Naive thymus-derived CD4-positive, alpha-beta T cell (primary cell): ENCODE measurements at regions of chr10 and their contacts with region 1.

Region 1: GRCh38 chr10:129030996-129031843 is 435.8 kb upstream of the MGMT start:
- DNase-seq: peak; percentile 30 to 64 (median 56)
- ATAC-seq: peak; percentile 72
- H3K4me3 ChIP-seq: no peak overlapping the region
- H3K4me3 Mint-ChIP-seq: peak overlapping the region in 6 of 10 donors; percentile 46 to 74 (median 61)
- H3K27ac ChIP-seq: no peak overlapping the region
- H3K27ac Mint-ChIP-seq: peak overlapping the region in 3 of 9 donors; percentile 1 to 58 (median 13)
- H3K4me1 ChIP-seq: peaks cover 5 to 23% of the 10 kb centered on the region in 2 donors
- H3K4me1 Mint-ChIP-seq: peaks cover 11 to 48% (median 39%) of the 10 kb centered on the region in 7 donors
- H3K27me3 ChIP-seq: no peaks in the 10 kb centered on the region
- H3K27me3 Mint-ChIP-seq: peaks cover 15 to 44% (median 24%) of the 10 kb centered on the region in 5 donors

Region 2: GRCh38 chr10:128211953-128212727 is 819.1 kb before region 1 on chr10:
- CTCF ChIA-PET with region 1: no interaction called
- POLR2A ChIA-PET with region 1: no interaction called
- intact Hi-C with region 1: loop called in 1 of 2 experiments (anchors 5 kb)
- DNase-seq: peak; percentile 66 to 91 (median 80)
- ATAC-seq: peak; percentile 87
- H3K4me3 ChIP-seq: peak overlapping the region; percentile 44
- H3K4me3 Mint-ChIP-seq: peak overlapping the region; percentile 75 to 91 (median 86)
- H3K27ac ChIP-seq: no peak overlapping the region
- H3K27ac Mint-ChIP-seq: peak overlapping the region; percentile 83 to 94 (median 88)
- H3K4me1 ChIP-seq: peaks cover 4 to 8% of the 10 kb centered on the region in 2 donors
- H3K4me1 Mint-ChIP-seq: peaks cover 10 to 25% (median 17%) of the 10 kb centered on the region in 7 donors
- H3K27me3 ChIP-seq: no peaks in the 10 kb centered on the region
- H3K27me3 Mint-ChIP-seq: peaks cover 0 to 21% (median 0%) of the 10 kb centered on the region in 5 donors

Region 3: DNA sequence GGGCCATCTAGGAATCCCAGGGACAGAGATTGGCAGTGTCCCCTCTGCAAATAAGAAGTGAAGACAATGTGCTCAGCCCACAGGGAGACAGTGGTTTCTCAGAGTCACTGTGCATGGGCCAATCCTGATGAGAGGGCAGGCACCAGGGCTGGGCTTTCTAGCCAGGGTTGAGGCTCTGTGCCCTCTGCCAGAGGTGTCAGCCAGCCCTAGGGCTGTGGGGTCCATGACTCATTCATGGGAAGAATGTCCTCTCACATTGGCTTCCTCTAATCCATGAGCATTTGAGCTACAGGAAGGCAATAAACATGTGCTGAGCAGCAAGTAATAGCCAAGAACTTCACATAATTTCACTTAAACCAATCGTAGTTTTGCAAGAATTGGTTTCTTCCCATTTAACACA is 46.2 kb before region 1 on chr10:
- CTCF ChIA-PET with region 1: no interaction called
- POLR2A ChIA-PET with region 1: no interaction called
- intact Hi-C with region 1: no loop called
- DNase-seq: no peak
- ATAC-seq: no peak
- H3K4me3 ChIP-seq: no peak overlapping the region
- H3K4me3 Mint-ChIP-seq: no peak overlapping the region
- H3K27ac ChIP-seq: no peak overlapping the region
- H3K27ac Mint-ChIP-seq: no peak overlapping the region
- H3K4me1 ChIP-seq: no peaks in the 10 kb centered on the region
- H3K4me1 Mint-ChIP-seq: no peaks in the 10 kb centered on the region
- H3K27me3 ChIP-seq: no peaks in the 10 kb centered on the region
- H3K27me3 Mint-ChIP-seq: peaks cover 0 to 9% (median 5%) of the 10 kb centered on the region in 5 donors

Region 4: GRCh38 chr10:129101232-129101980 is 70.2 kb after region 1 on chr10:
- CTCF ChIA-PET with region 1: no interaction called
- POLR2A ChIA-PET with region 1: interaction called, 9 read pairs
- intact Hi-C with region 1: loop called in 1 of 2 experiments (anchors 1 kb)
- DNase-seq: peak in 4 of 9 donors; percentile 10 to 35 (median 20)
- ATAC-seq: no peak
- H3K4me3 ChIP-seq: no peak overlapping the region
- H3K4me3 Mint-ChIP-seq: peak overlapping the region in 7 of 10 donors; percentile 8 to 58 (median 30)
- H3K27ac ChIP-seq: no peak overlapping the region
- H3K27ac Mint-ChIP-seq: peak overlapping the region in 7 of 9 donors; percentile 7 to 88 (median 67)
- H3K4me1 ChIP-seq: peaks cover 0 to 39% of the 10 kb centered on the region in 2 donors
- H3K4me1 Mint-ChIP-seq: peaks cover 6 to 66% (median 55%) of the 10 kb centered on the region in 7 donors
- H3K27me3 ChIP-seq: no peaks in the 10 kb centered on the region
- H3K27me3 Mint-ChIP-seq: no peaks in the 10 kb centered on the region

Region 5: DNA sequence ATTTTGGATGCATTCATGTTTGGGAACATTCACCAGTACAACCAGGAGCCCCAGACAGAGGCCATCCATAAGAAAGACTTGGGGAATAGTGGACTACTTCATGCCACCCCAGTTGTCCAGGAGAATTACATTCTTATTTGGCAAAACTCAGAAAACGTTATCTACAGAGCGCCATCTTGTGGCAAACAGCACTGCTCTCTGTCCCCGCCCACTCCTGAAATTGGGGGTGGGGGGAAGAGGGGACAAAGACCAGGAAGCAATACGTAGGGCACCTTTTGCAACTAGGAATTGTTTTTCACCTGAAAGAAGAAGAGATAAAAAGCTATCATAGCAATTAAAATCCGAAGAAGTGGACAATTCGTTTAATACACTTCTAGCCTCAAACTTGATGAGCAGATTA is 301.3 kb after region 1 on chr10:
- CTCF ChIA-PET with region 1: interaction called, 98 read pairs
- POLR2A ChIA-PET with region 1: interaction called, 11 read pairs
- intact Hi-C with region 1: loop called (anchors 1 kb)
- DNase-seq: peak in 4 of 9 donors; percentile 8 to 29 (median 19)
- ATAC-seq: no peak
- H3K4me3 ChIP-seq: no peak overlapping the region
- H3K4me3 Mint-ChIP-seq: peak overlapping the region in 2 of 10 donors; percentile 37 to 44
- H3K27ac ChIP-seq: no peak overlapping the region
- H3K27ac Mint-ChIP-seq: peak overlapping the region in 1 of 9 donors; percentile 0
- H3K4me1 ChIP-seq: no peaks in the 10 kb centered on the region
- H3K4me1 Mint-ChIP-seq: peaks cover 0 to 9% (median 4%) of the 10 kb centered on the region in 7 donors
- H3K27me3 ChIP-seq: no peaks in the 10 kb centered on the region
- H3K27me3 Mint-ChIP-seq: peaks cover 8 to 31% (median 12%) of the 10 kb centered on the region in 5 donors

Region 6: GRCh38 chr10:129963641-129964501 is 932.7 kb after region 1 on chr10 and contains the start of gene EBF3:
- CTCF ChIA-PET with region 1: no interaction called
- POLR2A ChIA-PET with region 1: no interaction called
- intact Hi-C with region 1: loop called in 1 of 2 experiments (anchors 5 kb)
- DNase-seq: peak in 8 of 9 donors; percentile 30 to 61 (median 54)
- ATAC-seq: peak; percentile 80
- H3K4me3 ChIP-seq: peak within 1 kb of the TSS; percentile 32
- H3K4me3 Mint-ChIP-seq: peak within 1 kb of the TSS; percentile 67 to 89 (median 77)
- H3K27ac ChIP-seq: no peak within 1 kb of the TSS
- H3K27ac Mint-ChIP-seq: peak within 1 kb of the TSS in 3 of 9 donors; percentile 45 to 76 (median 65)
- H3K4me1 ChIP-seq: peaks cover 7 to 13% of the 10 kb centered on the region in 2 donors
- H3K4me1 Mint-ChIP-seq: peaks cover 8 to 43% (median 39%) of the 10 kb centered on the region in 7 donors
- H3K27me3 ChIP-seq: peaks cover 8 to 36% of the 10 kb centered on the region in 2 donors
- H3K27me3 Mint-ChIP-seq: peaks cover 46 to 67% (median 51%) of the 10 kb centered on the region in 5 donors
- total RNA-seq, gene EBF3: not detected

Region 7: GRCh38 chr10:130127364-130128061 is 1096.3 kb after region 1 on chr10:
- CTCF ChIA-PET with region 1: interaction called, 5 read pairs
- POLR2A ChIA-PET with region 1: interaction called, 3 read pairs
- intact Hi-C with region 1: loop called in 1 of 2 experiments (anchors 5 kb)
- DNase-seq: peak in 8 of 9 donors; percentile 24 to 60 (median 46)
- ATAC-seq: peak; percentile 92
- H3K4me3 ChIP-seq: no peak overlapping the region
- H3K4me3 Mint-ChIP-seq: peak overlapping the region in 2 of 10 donors; percentile 19 to 22
- H3K27ac ChIP-seq: no peak overlapping the region
- H3K27ac Mint-ChIP-seq: no peak overlapping the region
- H3K4me1 ChIP-seq: no peaks in the 10 kb centered on the region
- H3K4me1 Mint-ChIP-seq: peaks cover 0 to 10% (median 7%) of the 10 kb centered on the region in 7 donors
- H3K27me3 ChIP-seq: no peaks in the 10 kb centered on the region
- H3K27me3 Mint-ChIP-seq: peaks cover 9 to 53% (median 17%) of the 10 kb centered on the region in 5 donors